Sciatic nerve (tissue), 2 donors: ENCODE measurements at regions of chr1 and their contacts with region 1.

Region 1: DNA sequence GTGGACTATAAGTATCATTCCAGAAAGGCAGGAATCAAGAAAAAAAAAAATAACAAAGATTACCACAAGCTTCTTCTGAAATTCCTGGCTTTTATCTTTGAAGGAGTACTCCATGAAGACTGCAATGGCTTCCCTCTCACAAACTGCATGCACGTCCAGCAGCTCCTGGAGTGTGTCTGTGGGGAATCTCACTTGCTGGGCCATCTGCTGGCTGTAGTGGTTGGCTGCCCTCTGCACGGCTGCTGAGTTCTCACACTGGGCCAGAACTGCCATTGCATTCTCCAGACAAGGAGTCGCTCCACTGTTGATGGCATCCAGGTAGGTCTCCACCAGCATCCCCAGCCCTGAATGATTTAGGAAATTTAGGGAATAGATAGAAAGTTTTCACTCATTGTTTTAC is 23.3 kb upstream of the GBP2 start:
- DNase-seq: no peak
- ATAC-seq: peak; percentile 90

Region 2: GRCh38 chr1:88791192-88791591 is 358.0 kb before region 1 on chr1:
- intact Hi-C with region 1: no loop called
- DNase-seq: no peak
- ATAC-seq: no peak

Region 3: DNA sequence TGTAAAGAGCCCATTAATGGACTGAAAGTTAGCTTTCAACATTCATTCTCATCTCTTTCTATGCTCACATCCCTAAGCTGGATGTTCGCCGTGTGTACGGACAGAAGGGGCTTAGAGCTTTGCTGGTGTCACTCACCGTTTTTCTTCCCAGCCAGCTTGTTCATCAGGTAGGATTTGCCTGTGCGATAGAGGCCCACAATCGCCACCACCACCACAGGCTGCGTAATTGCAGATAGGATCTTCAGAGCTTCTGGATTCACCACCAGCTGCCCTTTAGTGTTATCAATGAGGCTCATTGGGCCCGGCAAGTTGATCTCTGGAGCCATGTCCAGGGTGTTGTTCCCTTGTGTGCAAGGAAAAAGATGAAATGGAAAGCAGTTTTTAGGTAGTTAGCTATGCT is 27.6 kb before region 1 on chr1:
- intact Hi-C with region 1: loop called (anchors 2 kb)
- DNase-seq: no peak
- ATAC-seq: no peak

Region 4: GRCh38 chr1:89171067-89171438 is 21.8 kb after region 1 on chr1:
- intact Hi-C with region 1: no loop called
- DNase-seq: no peak
- ATAC-seq: no peak

Region 5: GRCh38 chr1:89198491-89199072 is 49.4 kb after region 1 on chr1 and contains the start of gene GBP4:
- intact Hi-C with region 1: no loop called
- DNase-seq: peak; percentile 64
- ATAC-seq: peak; percentile 85
- total RNA-seq, gene GBP4: 19.4 TPM